ENCODE measurements at regions of chr4 and their contacts with region 1.

Region 1: DNA sequence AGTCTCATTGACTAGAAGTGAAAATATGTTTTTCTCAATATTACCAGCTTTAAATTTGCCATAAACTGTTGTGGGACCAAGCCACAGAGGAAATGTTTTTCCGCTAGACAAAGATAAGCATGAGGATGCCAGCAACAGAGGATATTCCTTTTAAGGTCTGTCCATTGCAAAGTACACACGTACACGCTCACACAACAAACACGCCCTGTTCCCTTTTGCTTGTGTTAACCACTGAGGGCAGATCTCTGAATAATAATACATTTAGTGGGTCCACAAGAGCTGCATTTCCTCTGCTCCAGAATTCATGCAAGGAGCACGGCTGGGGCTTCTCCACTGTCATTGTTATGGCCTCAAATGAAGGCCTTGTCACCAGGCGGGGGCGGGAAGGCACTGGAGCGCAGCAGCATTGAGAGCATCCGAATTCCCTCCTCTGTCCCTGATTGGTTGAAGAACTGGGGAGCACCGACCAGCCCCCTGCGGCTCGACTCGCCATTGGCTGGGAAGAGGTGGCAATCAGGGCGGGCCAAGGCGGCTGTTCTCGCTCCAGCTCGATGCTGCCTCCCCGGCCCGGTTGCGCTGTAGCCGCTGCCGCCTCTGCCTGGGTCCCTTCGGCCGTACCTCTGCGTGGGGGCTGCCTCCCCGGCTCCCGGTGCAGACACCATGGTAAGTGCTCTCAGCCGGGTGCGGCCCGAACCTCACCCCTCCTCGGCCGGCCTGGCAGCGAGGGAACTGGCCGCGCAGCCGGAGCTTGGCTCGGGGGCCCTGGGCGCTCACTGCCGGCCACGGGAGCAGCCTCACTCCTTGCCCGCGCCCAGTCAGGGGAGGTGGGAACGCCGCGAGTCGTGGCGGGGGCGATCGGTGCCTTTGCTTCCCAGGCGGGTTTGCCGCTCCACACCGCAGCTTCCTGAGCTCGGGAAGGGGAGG is at the start of gene GUCY1B1:
- DNase-seq: peak; percentile 93
- H3K4me3 Mint-ChIP-seq: peak within 1 kb of the TSS; percentile 62
- H3K27ac Mint-ChIP-seq: peak within 1 kb of the TSS; percentile 85
- H3K4me1 Mint-ChIP-seq: peaks cover 24% of the 10 kb centered on the region
- H3K27me3 Mint-ChIP-seq: no peaks in the 10 kb centered on the region
- CTCF ChIP-seq: no peak
- total RNA-seq, gene GUCY1B1: 19.3 TPM in 2 replicates

Region 2: GRCh38 chr4:155529272-155529671 is 229.5 kb before region 1 on chr4:
- CTCF ChIA-PET with region 1: interaction called, 3 read pairs
- intact Hi-C with region 1: loop called (anchors 5 kb)
- DNase-seq: peak; percentile 43
- H3K4me3 Mint-ChIP-seq: no peak overlapping the region
- H3K27ac Mint-ChIP-seq: peak overlapping the region; percentile 89
- H3K4me1 Mint-ChIP-seq: peaks cover 16% of the 10 kb centered on the region
- H3K27me3 Mint-ChIP-seq: no peaks in the 10 kb centered on the region
- CTCF ChIP-seq: peak; percentile 27

Region 3: GRCh38 chr4:155667568-155668511 is 90.9 kb before region 1 on chr4:
- CTCF ChIA-PET with region 1: no interaction called
- intact Hi-C with region 1: loop called (anchors 5 kb)
- DNase-seq: peak; percentile 45
- H3K4me3 Mint-ChIP-seq: peak overlapping the region; percentile 85
- H3K27ac Mint-ChIP-seq: peak overlapping the region; percentile 81
- H3K4me1 Mint-ChIP-seq: peaks cover 36% of the 10 kb centered on the region
- H3K27me3 Mint-ChIP-seq: no peaks in the 10 kb centered on the region
- CTCF ChIP-seq: no peak

Region 4: GRCh38 chr4:155703486-155704247 is 55.1 kb before region 1 on chr4:
- CTCF ChIA-PET with region 1: no interaction called
- intact Hi-C with region 1: loop called (anchors 5 kb)
- DNase-seq: no peak
- H3K4me3 Mint-ChIP-seq: no peak overlapping the region
- H3K27ac Mint-ChIP-seq: peak overlapping the region; percentile 77
- H3K4me1 Mint-ChIP-seq: peaks cover 32% of the 10 kb centered on the region
- H3K27me3 Mint-ChIP-seq: no peaks in the 10 kb centered on the region
- CTCF ChIP-seq: no peak

Region 5: DNA sequence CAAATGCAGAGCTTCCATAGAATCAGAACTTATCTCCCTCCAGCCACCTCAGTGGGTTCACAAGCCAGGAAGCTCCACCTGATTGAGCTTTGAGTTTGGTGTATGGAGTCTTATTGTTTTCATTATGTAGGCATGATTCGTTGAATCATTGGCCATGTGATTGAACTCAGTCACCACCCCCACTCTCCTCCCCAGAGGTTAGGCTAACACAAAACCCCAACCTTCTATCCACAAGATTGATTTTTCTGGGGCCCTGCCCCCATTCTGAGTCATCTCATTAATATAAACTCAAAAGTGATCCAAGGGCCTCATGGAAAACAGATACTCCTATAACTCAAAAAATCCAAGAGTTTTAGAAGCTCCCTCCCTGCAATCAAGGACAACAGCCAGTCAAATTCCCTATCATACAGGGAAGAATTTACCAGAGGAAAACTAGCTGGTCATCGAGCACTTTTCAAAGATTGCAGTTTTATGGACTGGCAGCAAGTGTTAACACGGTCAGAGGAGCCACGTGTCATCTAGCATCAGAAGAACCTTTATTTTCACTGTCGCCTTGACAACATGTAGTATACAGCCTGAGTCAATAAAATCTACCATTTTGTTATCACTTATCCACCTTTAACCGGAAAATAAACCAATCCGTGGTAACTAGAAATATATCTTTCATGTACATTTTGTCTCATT is 35.8 kb before region 1 on chr4:
- CTCF ChIA-PET with region 1: no interaction called
- intact Hi-C with region 1: loop called (anchors 2 kb)
- DNase-seq: peak; percentile 73
- H3K4me3 Mint-ChIP-seq: peak overlapping the region; percentile 47
- H3K27ac Mint-ChIP-seq: peak overlapping the region; percentile 85
- H3K4me1 Mint-ChIP-seq: peaks cover 52% of the 10 kb centered on the region
- H3K27me3 Mint-ChIP-seq: no peaks in the 10 kb centered on the region
- CTCF ChIP-seq: no peak

Measured in Calu3 (cell line).